PC-9 (cell line): ENCODE measurements at regions of chr12 and their contacts with region 1.

Region 1: GRCh38 chr12:123050331-123050831 is 69.9 kb downstream of the ARL6IP4 start:
- DNase-seq: no peak
- H3K4me3 ChIP-seq: no peak overlapping the region
- H3K27ac ChIP-seq: no peak overlapping the region
- H3K4me1 ChIP-seq: peaks cover 4% of the 10 kb centered on the region
- H3K27me3 ChIP-seq: no peaks in the 10 kb centered on the region
- CTCF ChIP-seq: no peak

Region 2: GRCh38 chr12:122995503-122996187 is 54.7 kb before region 1 on chr12:
- CTCF ChIA-PET with region 1: interaction called, 16 read pairs
- POLR2A ChIA-PET with region 1: no interaction called
- intact Hi-C with region 1: no loop called
- DNase-seq: no peak
- H3K4me3 ChIP-seq: no peak overlapping the region
- H3K27ac ChIP-seq: no peak overlapping the region
- H3K4me1 ChIP-seq: no peaks in the 10 kb centered on the region
- H3K27me3 ChIP-seq: no peaks in the 10 kb centered on the region
- CTCF ChIP-seq: no peak

Region 3: DNA sequence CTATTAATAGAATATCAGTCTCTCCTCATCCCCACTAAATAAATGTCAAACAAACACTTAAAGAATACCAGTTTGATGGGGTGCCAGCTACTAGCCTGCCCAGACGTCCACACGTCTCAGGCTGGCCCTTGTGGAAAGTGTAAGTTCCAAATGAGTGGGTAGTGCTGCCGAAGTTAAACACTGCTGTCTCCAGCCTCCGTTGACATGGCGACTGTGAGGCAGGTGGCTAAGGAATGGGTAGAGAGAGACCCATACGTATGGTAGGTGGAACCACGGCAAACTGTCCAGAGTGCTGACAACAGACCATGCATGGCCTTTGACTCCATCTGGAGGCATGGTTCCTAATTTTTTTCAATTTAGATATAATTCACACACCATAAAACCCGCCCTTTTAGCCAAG is 62.6 kb after region 1 on chr12:
- CTCF ChIA-PET with region 1: interaction called, 15 read pairs
- POLR2A ChIA-PET with region 1: no interaction called
- intact Hi-C with region 1: no loop called
- DNase-seq: no peak
- H3K4me3 ChIP-seq: no peak overlapping the region
- H3K27ac ChIP-seq: no peak overlapping the region
- H3K4me1 ChIP-seq: no peaks in the 10 kb centered on the region
- H3K27me3 ChIP-seq: no peaks in the 10 kb centered on the region
- CTCF ChIP-seq: no peak

Region 4: DNA sequence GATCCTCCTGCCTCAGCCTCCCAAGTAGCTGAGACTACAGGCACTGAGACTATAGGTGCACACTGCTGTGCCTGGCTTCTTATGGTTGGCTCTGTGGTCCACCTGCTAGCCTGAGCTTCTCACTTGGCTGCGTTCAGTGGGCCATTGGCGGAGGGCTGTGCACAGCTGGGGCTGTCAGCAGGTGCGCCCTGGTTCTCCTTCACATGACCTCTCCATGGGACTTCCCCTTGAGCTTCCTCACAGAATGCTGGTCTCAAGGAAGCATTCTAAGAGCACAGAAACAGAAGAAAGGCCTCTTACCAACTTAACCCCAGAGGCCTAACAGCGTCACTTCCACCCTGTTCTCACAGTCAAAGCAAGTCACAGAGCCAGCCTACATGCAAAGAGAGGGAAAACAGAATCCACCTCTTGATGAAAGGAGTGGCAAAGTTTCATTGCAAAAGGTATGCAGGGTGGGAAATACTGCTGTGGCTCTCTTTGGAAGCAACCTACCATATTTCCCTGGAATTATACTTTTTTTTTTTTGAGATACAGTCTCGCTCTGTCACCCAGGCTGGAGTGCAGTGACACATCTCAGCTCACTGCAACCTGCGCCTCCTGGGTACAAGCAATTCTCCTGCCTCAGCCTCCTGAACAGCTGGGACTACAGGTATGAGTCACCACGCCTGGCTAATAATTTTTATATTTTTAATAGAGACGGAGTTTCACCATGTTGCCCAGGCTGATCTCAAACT is 376.8 kb after region 1 on chr12:
- CTCF ChIA-PET with region 1: no interaction called
- POLR2A ChIA-PET with region 1: no interaction called
- intact Hi-C with region 1: no loop called
- DNase-seq: no peak
- H3K4me3 ChIP-seq: no peak overlapping the region
- H3K27ac ChIP-seq: no peak overlapping the region
- H3K4me1 ChIP-seq: no peaks in the 10 kb centered on the region
- H3K27me3 ChIP-seq: no peaks in the 10 kb centered on the region
- CTCF ChIP-seq: no peak

Region 5: DNA sequence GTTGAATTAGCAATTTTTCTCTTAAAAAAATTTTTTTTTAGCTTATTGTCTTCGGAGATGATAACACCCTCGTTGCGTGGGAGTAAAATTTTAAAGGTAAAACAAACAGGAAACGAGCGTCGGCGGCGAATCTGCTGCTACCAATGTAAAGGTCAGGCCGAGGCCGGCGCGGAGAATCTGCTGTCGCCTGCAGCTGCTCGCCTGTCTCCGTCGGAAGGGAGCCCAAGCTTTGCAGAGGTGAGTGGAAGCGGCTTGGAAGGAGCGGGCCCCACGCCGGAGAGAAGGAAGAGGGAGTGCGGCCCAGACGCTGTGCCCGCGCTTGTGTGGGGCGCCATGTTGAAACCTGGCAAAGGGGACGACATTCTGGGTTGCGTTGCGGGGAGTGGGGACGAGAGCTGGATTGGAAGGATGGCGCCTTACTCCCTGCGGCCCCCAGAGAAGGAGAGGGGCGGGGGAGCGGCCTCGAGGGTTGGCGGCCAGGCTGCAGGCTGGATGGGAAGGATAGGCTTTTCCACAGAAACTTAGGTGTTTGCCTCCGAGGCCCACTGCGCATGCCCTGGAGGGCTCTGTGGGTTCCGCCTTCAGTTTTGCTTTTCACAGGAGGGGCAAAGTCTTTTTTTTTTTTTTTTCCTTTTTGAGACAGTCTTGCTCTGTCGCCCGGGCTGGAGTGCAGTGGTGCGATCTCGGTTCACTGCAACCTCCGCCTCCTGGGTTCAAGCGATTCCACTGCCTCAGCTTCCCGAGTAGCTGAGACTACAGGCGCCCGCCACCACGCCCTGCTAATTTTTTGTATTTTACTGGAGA is 407.8 kb after region 1 on chr12 and contains the start of gene SNRNP35:
- CTCF ChIA-PET with region 1: no interaction called
- POLR2A ChIA-PET with region 1: no interaction called
- intact Hi-C with region 1: no loop called
- DNase-seq: peak; percentile 56 to 78
- H3K4me3 ChIP-seq: peak within 1 kb of the TSS; percentile 89
- H3K27ac ChIP-seq: peak within 1 kb of the TSS; percentile 99
- H3K4me1 ChIP-seq: 0 out of 2 replicates have a peak, but pooled peaks cover 6% of the 10 kb centered on the region
- H3K27me3 ChIP-seq: no peaks in the 10 kb centered on the region
- CTCF ChIP-seq: no peak
- total RNA-seq, gene SNRNP35: 24.3 and 28.6 TPM in 2 replicates